Activated naive CD4-positive, alpha-beta T cell treated with anti-CD3 and anti-CD28 coated beads for 36 hours (primary cell): ENCODE measurements at regions of chr16 and their contacts with region 1.

Region 1: GRCh38 chr16:28326944-28327610 is 34.8 kb downstream of the SBK1 start:
- DNase-seq: peak; percentile 72
- H3K4me3 Mint-ChIP-seq: no peak overlapping the region
- H3K27ac Mint-ChIP-seq: no peak overlapping the region
- H3K4me1 Mint-ChIP-seq: no peaks in the 10 kb centered on the region
- H3K27me3 Mint-ChIP-seq: no peaks in the 10 kb centered on the region

Region 2: DNA sequence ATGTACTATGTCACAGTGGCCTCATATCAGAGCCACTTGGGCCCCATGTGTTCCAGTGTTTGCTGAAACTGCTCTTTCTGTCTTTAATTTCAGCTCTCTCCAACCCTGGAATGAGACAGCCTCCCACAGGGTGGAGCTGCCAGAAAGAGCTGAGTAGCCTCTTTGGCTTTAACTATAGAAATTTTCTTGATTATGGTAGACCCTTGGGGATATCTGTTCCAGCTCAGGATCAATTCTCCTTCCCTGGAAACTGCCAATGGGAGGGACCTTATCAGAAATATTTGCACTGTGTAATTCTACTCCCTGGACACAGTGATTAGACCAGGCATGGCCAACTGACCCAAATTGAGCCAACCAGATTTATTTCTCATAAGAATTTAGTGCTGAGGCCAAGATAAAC is 1162.7 kb before region 1 on chr16:
- CTCF ChIA-PET with region 1: no interaction called
- intact Hi-C with region 1: no loop called
- DNase-seq: no peak
- H3K4me3 Mint-ChIP-seq: no peak overlapping the region
- H3K27ac Mint-ChIP-seq: no peak overlapping the region
- H3K4me1 Mint-ChIP-seq: peaks cover 16% of the 10 kb centered on the region
- H3K27me3 Mint-ChIP-seq: no peaks in the 10 kb centered on the region

Region 3: DNA sequence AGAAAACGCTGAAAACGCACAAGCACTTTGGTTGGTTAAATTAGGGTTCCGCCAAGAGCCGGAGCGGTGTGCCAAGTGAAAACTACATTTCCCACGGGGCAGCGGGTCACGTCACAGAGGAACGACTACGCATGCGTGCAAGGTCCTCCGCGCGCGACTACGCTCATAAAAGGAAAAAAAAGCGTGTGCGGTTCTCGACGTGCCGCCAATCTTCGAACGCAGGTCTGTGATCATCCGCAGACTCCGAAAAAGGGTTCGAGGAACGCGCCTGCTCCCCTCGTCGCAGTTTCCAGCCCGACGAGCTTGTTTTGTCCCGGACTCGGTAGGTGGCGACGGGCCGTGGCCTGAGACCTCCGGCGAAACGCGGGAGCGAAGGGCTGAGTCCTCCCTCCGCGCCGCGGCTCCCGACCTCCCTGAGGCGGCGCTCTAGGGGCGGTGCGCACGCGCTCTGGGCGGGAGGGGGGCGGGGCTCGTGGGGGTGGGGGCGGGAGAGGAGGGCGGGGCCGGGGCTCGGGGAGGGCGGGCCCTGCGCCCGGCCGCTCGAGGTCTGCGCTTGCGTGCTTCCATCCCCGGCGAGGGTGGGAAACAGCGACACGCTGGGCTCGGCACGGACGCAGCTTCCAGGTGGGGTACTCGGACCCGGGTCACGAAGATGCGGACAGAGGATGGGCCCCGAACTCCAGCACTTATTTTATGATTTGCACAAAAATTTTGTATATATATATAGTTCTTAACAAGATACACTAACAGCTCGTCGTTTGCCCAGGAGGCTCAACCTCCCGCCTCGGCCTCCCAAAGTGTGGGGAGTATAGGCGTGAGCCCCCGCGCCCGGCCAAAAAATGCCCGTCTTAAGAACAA is 226.9 kb after region 1 on chr16 and contains the start of gene SGF29:
- CTCF ChIA-PET with region 1: interaction called, 3 read pairs
- intact Hi-C with region 1: loop called (anchors 1 kb)
- DNase-seq: peak; percentile 96
- H3K4me3 Mint-ChIP-seq: peak within 1 kb of the TSS; percentile 93
- H3K27ac Mint-ChIP-seq: peak within 1 kb of the TSS; percentile 97
- H3K4me1 Mint-ChIP-seq: peaks cover 41% of the 10 kb centered on the region
- H3K27me3 Mint-ChIP-seq: no peaks in the 10 kb centered on the region
- total RNA-seq, gene SGF29: 15.9 TPM